ENCODE measurements at regions of chr20 and their contacts with region 1.

Region 1: GRCh38 chr20:63223221-63224207 is 7.6 kb upstream of the YTHDF1 start:
- DNase-seq: peak in 2 of 3 donors; percentile 36 to 46
- H3K4me3 ChIP-seq: no peak overlapping the region
- H3K27ac ChIP-seq: no peak overlapping the region
- H3K4me1 ChIP-seq: peaks cover 0 to 11% (median 4%) of the 10 kb centered on the region in 4 experiments
- H3K27me3 ChIP-seq: peaks cover 0 to 4% (median 2%) of the 10 kb centered on the region in 5 experiments

Region 2: DNA sequence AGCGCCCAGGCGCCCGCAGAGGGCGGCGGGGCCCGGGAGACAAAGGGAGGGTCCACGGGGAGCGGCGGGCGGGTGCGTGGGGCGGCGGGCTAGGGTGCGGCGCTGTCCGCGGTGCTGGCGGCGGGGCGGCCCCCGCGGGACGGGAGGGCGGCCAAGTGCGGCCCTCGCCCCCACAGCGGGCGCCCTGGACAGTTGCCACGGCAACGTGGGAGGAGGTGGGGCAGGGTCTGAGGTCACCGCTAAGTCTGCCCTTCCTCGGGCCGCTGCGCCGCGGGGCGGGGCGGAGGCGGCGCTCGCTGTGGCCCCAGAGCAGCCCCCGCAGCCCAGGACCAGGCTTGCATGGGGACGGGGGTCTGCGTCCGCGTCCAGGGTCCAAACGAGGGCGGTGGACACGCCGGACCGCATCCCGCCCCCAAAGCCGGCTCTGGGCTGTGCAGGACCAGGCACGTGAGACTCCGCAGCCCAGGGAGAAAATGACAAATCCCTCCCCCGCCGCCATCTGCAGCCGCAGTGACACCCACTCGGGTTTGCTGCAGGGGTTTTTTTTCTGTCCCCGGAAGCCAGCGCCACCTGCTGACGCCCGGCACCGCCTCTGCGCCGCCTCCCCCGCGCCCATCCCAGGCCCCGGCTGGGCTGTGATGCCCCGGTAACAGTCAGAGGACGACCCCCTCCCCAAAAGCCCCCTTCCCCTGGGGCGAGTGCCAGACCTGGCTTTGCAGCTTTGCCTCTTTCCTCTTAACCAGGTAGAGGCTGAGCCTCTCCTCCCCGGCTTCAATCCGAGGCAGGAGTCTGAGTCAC is 44.4 kb before region 1 on chr20:
- CTCF ChIA-PET with region 1: interaction called, 15 read pairs
- POLR2A ChIA-PET with region 1: no interaction called
- DNase-seq: peak; percentile 29 to 60 (median 49)
- H3K4me3 ChIP-seq: peak overlapping the region in 2 of 7 experiments; percentile 28 to 43
- H3K27ac ChIP-seq: no peak overlapping the region
- H3K4me1 ChIP-seq: peaks cover 0 to 37% (median 22%) of the 10 kb centered on the region in 4 experiments
- H3K27me3 ChIP-seq: peaks cover 0 to 89% (median 23%) of the 10 kb centered on the region in 5 experiments

Region 3: GRCh38 chr20:63198606-63199005 is 24.9 kb before region 1 on chr20:
- CTCF ChIA-PET with region 1: interaction called, 14 read pairs
- POLR2A ChIA-PET with region 1: no interaction called
- DNase-seq: no peak
- H3K4me3 ChIP-seq: no peak overlapping the region
- H3K27ac ChIP-seq: no peak overlapping the region
- H3K4me1 ChIP-seq: no peaks in the 10 kb centered on the region
- H3K27me3 ChIP-seq: no peaks in the 10 kb centered on the region

Region 4: GRCh38 chr20:63241272-63241671 is 17.8 kb after region 1 on chr20:
- CTCF ChIA-PET with region 1: interaction called, 54 read pairs
- POLR2A ChIA-PET with region 1: no interaction called
- DNase-seq: no peak
- H3K4me3 ChIP-seq: no peak overlapping the region
- H3K27ac ChIP-seq: no peak overlapping the region
- H3K4me1 ChIP-seq: peaks cover 0 to 3% (median 1%) of the 10 kb centered on the region in 4 experiments
- H3K27me3 ChIP-seq: peaks cover 0 to 17% (median 3%) of the 10 kb centered on the region in 5 experiments

Region 5: GRCh38 chr20:63280929-63281545 is 57.5 kb after region 1 on chr20:
- CTCF ChIA-PET with region 1: interaction called, 15 read pairs
- POLR2A ChIA-PET with region 1: no interaction called
- DNase-seq: no peak
- H3K4me3 ChIP-seq: no peak overlapping the region
- H3K27ac ChIP-seq: no peak overlapping the region
- H3K4me1 ChIP-seq: no peaks in the 10 kb centered on the region
- H3K27me3 ChIP-seq: no peaks in the 10 kb centered on the region